ENCODE measurements at regions of chr14 and their contacts with region 1.

Region 1: DNA sequence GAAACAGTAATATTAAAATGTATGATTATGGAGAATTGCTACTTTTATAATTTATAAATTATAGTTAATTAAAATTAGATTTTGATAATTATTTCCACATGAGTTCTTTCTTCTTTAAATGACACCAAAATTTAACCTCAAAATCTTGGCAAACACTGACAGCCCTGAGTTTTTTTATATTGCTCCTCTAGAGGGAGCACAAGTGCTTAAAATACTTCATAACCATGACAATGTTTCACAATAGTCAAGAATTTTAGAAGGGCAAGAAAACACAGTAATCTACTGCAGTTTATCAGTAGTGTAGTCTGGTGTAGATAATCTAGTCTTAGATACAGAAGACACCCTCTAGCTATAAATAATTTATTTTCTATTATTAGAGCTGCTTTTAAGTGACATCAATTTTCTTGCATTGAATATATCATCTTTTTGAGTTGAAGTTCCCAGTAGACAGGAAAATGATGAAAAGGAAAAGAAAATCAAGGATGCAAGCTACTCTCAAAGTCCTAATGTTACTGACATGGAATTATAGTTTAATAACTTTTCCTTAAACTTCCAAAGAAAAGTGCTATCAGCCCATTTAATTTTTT is 14.3 kb upstream of the PTGER2 start:
- DNase-seq: peak; percentile 10
- H3K4me3 ChIP-seq: no peak overlapping the region
- H3K27me3 ChIP-seq: peaks cover 6% of the 10 kb centered on the region
- CTCF ChIP-seq: peak; percentile 59

Region 2: GRCh38 chr14:52325126-52325525 is 25.3 kb after region 1 on chr14:
- CTCF ChIA-PET with region 1: no interaction called
- POLR2A ChIA-PET with region 1: no interaction called
- DNase-seq: no peak
- H3K4me3 ChIP-seq: no peak overlapping the region
- H3K27me3 ChIP-seq: no peaks in the 10 kb centered on the region; the same call in 1 of the 2 replicates
- CTCF ChIP-seq: no peak

Region 3: DNA sequence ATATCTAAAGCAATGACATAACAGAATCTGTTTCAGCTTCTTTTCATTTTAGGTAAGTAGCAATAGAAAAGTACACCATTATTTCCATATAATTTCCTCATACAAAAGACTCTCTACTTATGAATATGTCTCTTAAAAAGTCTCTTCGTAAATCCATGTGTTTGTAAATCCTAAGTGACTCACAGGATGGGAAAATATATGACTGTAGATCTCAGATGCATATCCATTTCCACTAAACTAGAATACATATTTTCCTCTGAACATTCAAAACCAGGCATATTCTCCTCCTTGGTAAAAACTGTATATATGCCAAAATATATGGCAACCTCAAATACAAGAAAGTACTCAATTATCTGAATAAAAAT is 158.9 kb after region 1 on chr14:
- CTCF ChIA-PET with region 1: interaction called, 15 read pairs
- POLR2A ChIA-PET with region 1: no interaction called
- DNase-seq: no peak
- H3K4me3 ChIP-seq: no peak overlapping the region
- H3K27me3 ChIP-seq: no peaks in the 10 kb centered on the region
- CTCF ChIP-seq: no peak

Region 4: DNA sequence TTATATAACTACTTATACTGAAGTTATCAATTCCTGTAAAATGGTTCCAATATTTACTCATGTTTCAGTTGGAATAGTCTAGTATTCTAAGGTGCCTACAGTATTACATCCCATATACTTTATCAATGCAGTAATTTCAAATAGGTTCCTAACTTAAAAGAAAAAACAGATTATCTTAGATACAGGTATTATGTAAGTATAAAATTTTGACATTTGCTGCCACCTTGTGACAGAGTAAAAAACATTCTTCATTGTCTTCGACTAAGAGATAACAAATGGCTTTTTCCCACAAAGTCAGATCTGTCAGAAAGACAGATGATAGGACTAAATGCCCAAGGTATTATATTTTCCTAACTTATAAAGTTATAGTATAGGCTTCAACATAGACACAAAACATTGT is 173.8 kb after region 1 on chr14:
- CTCF ChIA-PET with region 1: interaction called, 23 read pairs
- POLR2A ChIA-PET with region 1: no interaction called
- DNase-seq: no peak
- H3K4me3 ChIP-seq: no peak overlapping the region
- H3K27me3 ChIP-seq: no peaks in the 10 kb centered on the region
- CTCF ChIP-seq: peak; percentile 20; the same call in 1 of the 2 replicates